ENCODE measurements at regions of chr20 and their contacts with region 1.

Region 1: DNA sequence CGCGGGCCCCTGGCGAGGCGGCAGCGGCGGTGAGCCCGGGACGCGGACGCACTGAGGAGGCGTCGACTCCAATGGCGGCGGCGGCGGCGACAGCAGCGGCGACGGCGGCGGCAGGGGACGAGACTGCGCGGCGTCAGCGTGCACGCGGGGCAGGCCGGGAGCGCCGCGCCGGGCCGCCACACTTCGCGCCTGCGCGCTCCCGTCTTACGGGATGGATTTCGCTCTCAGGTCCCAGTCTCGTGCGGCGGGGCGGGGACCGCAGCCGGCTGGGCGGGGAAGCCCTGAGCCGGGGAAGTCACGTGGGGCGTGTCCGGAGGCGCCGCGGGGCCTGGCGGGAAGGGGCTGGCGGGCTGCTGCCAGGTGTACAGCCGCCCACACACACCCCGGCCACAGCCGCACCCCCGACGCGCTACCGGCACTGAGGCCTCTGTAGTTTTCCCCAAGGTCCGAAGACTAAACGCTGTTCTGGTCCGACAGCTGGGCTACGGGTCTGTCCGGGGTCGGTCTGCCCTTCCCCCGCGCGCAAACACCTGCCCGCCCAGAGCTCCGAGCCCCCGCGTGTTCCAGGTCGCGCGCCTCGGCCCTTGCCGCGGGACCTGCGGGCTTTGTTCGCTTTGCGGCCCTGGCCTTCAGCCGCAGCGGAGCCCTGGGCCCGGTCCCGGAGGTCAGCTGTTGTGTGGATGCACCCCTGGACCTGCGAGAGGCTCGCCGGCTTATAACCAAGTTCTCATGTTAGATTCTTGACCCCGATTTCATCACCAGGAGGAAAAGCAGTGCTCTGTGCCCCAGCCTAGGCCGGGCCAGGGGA is at the start of gene YTHDF1:
- DNase-seq: peak; percentile 87 to 97
- H3K4me3 ChIP-seq: peak within 1 kb of the TSS; percentile 98
- H3K27ac ChIP-seq: peak within 1 kb of the TSS; percentile 73 to 84
- H3K4me1 ChIP-seq: peaks cover 0 to 18% of the 10 kb centered on the region in 2 donors
- H3K27me3 ChIP-seq: no peaks in the 10 kb centered on the region
- CTCF ChIP-seq: no peak
- total RNA-seq, gene YTHDF1: 14.2 TPM

Region 2: DNA sequence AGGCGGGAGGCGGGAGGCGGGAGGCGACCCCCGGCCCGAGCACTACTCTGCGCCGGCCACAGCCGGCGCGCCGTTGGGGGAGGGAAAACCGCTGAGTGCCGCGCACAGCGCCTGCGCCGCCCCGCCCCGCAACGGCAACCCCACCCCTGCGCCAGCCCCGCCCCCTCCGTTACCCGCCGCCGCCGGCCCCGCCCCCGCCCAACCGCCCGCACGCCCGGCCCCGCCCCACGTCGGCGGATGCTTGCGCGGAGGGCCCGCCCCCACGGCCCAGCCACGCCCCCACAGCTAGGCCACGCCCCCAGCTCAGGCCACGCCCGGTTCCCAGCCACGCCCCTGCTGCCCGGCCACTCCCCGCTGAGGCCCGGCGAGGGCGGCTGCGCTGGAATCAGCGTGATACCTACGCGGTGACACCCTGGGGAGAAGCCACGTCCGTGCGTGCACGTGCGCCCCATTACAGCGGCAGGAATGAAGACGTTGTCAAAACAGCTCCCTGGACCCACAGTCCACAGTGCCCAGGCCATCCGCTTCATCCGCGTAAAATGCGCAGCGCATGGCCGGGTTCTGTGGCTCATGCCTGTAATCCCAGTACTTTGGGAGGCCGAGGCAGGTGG is 354.4 kb before region 1 on chr20 and contains the start of gene TCFL5:
- intact Hi-C with region 1: loop called (anchors 5 kb)
- DNase-seq: peak; percentile 53 to 93
- H3K4me3 ChIP-seq: peak within 1 kb of the TSS; percentile 57 to 69
- H3K27ac ChIP-seq: peak within 1 kb of the TSS; percentile 56 to 63
- H3K4me1 ChIP-seq: peaks cover 4 to 7% of the 10 kb centered on the region in 2 donors
- H3K27me3 ChIP-seq: no peaks in the 10 kb centered on the region
- CTCF ChIP-seq: no peak
- total RNA-seq, gene TCFL5: 1.1 TPM

Region 3: DNA sequence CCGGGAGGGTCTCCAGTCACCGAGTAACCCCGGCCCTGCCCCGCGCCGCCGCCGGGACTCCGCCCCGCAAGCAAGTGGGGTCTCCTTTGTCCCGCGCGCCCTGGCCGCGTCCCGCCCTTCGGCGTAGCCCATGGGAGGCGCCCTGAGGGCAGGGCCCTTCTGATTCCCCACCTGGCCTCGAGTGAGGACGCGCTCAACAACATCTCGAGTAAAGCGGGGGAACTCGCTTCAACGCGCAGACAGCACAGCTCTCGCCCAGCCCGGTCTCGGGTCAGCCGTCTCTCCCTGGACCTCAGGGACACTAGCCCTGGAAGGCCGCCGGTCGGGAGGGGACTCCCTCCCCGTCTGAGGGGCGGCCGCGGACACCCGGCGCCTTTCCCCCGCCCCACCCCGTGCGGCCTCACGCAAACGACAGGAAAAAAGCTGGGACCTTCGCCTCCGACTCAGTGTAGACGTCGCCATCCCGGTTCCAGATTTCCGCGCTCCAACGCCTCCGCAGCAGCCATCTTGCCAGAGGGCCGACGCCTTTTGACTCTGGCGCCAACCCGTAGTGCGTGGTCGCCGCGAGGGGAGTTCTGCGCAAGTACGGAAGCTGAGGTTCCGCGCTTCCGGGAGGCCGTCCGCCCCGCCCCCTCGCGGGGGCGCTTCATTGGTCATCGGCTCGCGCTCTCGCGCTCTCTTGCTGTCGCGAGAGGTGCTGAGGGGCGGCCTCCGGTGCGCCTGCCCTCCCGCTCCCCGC is 278.7 kb before region 1 on chr20:
- intact Hi-C with region 1: loop called (anchors 5 kb)
- DNase-seq: peak; percentile 85 to 98
- H3K4me3 ChIP-seq: peak overlapping the region; percentile 82 to 91
- H3K27ac ChIP-seq: peak overlapping the region; percentile 89 to 93
- H3K4me1 ChIP-seq: peaks cover 18 to 26% of the 10 kb centered on the region in 2 donors
- H3K27me3 ChIP-seq: no peaks in the 10 kb centered on the region
- CTCF ChIP-seq: no peak

Region 4: GRCh38 chr20:63101781-63102719 is 114.2 kb before region 1 on chr20:
- intact Hi-C with region 1: loop called (anchors 2 kb)
- DNase-seq: peak in 1 of 2 donors; percentile 66
- H3K4me3 ChIP-seq: peak overlapping the region; percentile 73
- H3K27ac ChIP-seq: peak overlapping the region; percentile 47 to 88
- H3K4me1 ChIP-seq: peaks cover 5% of the 10 kb centered on the region in 2 donors
- H3K27me3 ChIP-seq: no peaks in the 10 kb centered on the region
- CTCF ChIP-seq: no peak

Region 5: GRCh38 chr20:63183422-63184348 is 32.6 kb before region 1 on chr20:
- intact Hi-C with region 1: no loop called
- DNase-seq: no peak
- H3K4me3 ChIP-seq: no peak overlapping the region
- H3K27ac ChIP-seq: no peak overlapping the region
- H3K4me1 ChIP-seq: peaks cover 3 to 4% of the 10 kb centered on the region in 2 donors
- H3K27me3 ChIP-seq: peaks cover 10% of the 10 kb centered on the region
- CTCF ChIP-seq: peak in 2 of 3 experiments; percentile 35 to 44

Region 6: GRCh38 chr20:63272584-63273579 is 56.6 kb after region 1 on chr20 and contains the start of gene ARFGAP1:
- intact Hi-C with region 1: loop called (anchors 1 kb)
- DNase-seq: peak; percentile 36 to 92
- H3K4me3 ChIP-seq: peak within 1 kb of the TSS; percentile 91 to 99
- H3K27ac ChIP-seq: peak within 1 kb of the TSS; percentile 52 to 56
- H3K4me1 ChIP-seq: peaks cover 6 to 17% of the 10 kb centered on the region in 2 donors
- H3K27me3 ChIP-seq: no peaks in the 10 kb centered on the region
- CTCF ChIP-seq: no peak
- total RNA-seq, gene ARFGAP1: 57.0 TPM

Region 7: GRCh38 chr20:63973636-63974402 is 757.6 kb after region 1 on chr20:
- intact Hi-C with region 1: loop called (anchors 10 kb)
- DNase-seq: peak in 1 of 2 donors; percentile 90
- H3K4me3 ChIP-seq: peak overlapping the region; percentile 48 to 52
- H3K27ac ChIP-seq: no peak overlapping the region
- H3K4me1 ChIP-seq: peaks cover 9 to 11% of the 10 kb centered on the region in 2 donors
- H3K27me3 ChIP-seq: no peaks in the 10 kb centered on the region
- CTCF ChIP-seq: peak; percentile 95 to 100 (median 98)

Measured in ascending aorta (tissue), 2 donors.